ENCODE measurements at regions of chr16 and their contacts with region 1.

Region 1: GRCh38 chr16:3074860-3075522 is 9.6 kb downstream of the IL32 start:
- DNase-seq: peak; percentile 69
- ATAC-seq: peak; percentile 88
- H3K4me3 ChIP-seq: peak overlapping the region; percentile 55
- H3K27ac ChIP-seq: peak overlapping the region; percentile 77
- H3K4me1 ChIP-seq: peaks cover 45% of the 10 kb centered on the region
- H3K27me3 ChIP-seq: no peaks in the 10 kb centered on the region
- CTCF ChIP-seq: no peak
- EP300 ChIP-seq: no peak
- POLR2A ChIP-seq: peak; percentile 64
- RAD21 ChIP-seq: no peak

Region 2: DNA sequence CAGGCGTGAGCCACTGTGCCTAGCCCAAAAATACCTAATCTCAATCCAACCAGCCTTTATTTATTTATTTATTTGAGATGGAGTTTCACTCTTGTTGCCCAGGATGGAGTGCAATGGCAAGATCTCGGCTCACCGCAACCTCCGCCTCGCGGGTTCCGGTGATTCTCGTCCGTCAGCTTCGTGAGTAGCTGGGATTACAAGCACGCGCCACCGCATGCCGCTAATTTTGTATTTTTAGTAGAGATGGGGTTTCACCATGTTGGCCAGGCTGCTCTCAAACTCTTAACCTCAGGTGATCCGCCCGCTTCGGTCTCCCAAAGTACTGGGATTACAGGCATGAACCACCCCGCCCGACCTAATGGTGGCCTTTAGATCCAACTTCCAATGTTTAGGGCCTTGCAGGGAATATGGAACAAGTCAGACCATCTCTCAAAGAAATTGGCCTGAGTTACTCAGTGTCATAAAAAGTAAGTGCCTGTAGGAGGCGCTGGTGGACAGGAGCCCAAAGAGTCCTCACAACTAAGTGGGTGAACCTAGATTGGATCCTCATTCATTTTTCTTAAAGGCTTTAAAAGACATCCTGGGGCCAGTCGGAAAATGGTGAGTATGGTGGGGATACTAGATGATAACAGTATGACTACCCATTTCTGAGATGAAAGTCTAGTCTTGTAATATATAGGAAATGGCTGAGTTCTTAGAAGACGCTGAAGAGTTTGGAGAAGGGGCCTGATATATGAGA is 19.5 kb after region 1 on chr16:
- CTCF ChIA-PET with region 1: interaction called, 20 read pairs
- POLR2A ChIA-PET with region 1: interaction called, 4 read pairs
- RAD21 ChIA-PET with region 1: no interaction called
- SMC1A ChIA-PET with region 1: interaction called, 3 read pairs
- in situ Hi-C with region 1: no loop called
- intact Hi-C with region 1: no loop called
- DNase-seq: no peak
- ATAC-seq: peak; percentile 72
- H3K4me3 ChIP-seq: no peak overlapping the region
- H3K27ac ChIP-seq: no peak overlapping the region
- H3K4me1 ChIP-seq: peaks cover 6% of the 10 kb centered on the region; the same call in 1 of the 2 replicates
- H3K27me3 ChIP-seq: no peaks in the 10 kb centered on the region
- CTCF ChIP-seq: peak; percentile 64 to 75 (median 68)
- EP300 ChIP-seq: no peak
- POLR2A ChIP-seq: no peak
- RAD21 ChIP-seq: peak; percentile 63

Region 3: DNA sequence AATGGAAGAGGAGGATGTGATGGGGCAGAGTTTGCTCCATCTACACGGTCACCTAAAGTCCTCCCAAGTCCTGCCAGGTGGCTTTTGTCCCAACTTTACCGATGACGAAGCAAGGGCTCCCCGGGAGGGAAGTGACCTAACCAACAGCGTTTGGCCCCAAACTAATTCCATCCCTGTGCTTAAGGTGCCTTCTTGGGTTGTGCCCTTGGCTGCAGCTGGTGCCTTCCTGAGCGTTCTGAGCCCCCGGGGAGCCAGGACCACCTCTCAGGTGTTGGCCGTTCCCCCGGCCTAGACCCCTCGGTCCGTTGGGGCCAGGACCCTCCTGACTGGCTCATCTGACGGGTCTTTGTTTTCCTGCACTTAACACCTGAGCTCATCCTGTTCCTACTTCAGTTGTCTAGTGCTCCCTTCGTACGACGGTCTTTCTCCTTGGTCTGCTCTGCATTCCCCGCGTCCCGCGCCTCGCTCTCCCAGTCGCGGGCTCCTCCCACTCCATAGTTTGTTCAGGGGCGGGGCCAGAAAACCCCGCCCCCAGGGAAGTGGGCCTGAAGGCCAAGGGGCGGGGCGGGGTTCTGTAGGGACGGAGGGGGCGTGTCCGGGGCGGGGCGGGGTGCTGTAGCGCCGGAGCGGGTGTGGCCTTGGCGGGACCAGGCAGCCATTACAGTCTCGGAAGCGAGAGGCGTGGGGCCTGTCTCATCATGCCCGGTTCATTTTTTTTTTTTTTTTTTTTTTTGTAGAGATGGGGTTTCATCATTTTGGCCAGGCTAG is 24.9 kb after region 1 on chr16:
- CTCF ChIA-PET with region 1: interaction called, 20 read pairs
- POLR2A ChIA-PET with region 1: interaction called, 4 read pairs
- RAD21 ChIA-PET with region 1: no interaction called
- SMC1A ChIA-PET with region 1: no interaction called
- in situ Hi-C with region 1: no loop called
- intact Hi-C with region 1: loop called (anchors 2 kb)
- DNase-seq: no peak
- ATAC-seq: peak; percentile 92
- H3K4me3 ChIP-seq: peak overlapping the region; percentile 35; the same call in 1 of the 2 replicates
- H3K27ac ChIP-seq: no peak overlapping the region
- H3K4me1 ChIP-seq: peaks cover 29% of the 10 kb centered on the region
- H3K27me3 ChIP-seq: no peaks in the 10 kb centered on the region
- CTCF ChIP-seq: no peak
- EP300 ChIP-seq: no peak
- POLR2A ChIP-seq: peak; percentile 39; the same call in 1 of the 2 replicates
- RAD21 ChIP-seq: no peak

Region 4: DNA sequence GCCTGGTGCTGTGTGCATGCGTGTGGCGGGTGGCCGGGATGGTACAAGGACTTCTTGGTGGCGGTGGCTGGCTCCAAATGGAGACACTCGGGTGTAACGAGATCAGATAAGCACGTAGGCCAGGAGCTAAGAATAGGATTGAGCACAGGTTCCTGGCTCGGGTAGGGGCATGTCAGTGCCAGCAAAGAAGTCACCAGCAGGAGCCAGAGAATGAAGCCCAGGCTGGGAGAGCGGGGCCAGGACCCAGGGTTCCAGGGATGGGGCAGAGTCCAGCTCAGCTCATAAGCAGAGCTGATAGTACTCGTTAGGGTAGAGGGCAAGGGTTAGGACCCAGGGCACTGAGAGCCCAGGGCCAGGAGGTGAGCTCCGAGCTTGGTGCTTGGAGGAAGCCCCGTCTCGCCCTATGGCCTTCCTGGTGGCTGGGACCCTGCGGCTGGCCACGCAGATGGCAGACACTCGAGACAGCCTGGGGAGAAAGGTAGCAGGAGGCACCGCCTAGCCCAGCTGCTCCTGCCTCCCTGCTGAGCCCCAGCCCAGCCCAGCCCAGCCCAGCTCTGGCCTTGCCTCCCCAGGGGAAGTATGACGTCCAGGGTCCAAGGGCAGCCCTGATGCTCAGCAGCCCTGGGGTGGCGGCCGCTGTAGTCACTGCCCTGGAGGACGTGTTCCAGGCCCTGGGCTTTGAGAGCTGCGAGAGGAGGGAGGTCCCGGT is 68.8 kb after region 1 on chr16:
- CTCF ChIA-PET with region 1: no interaction called
- POLR2A ChIA-PET with region 1: no interaction called
- RAD21 ChIA-PET with region 1: no interaction called
- SMC1A ChIA-PET with region 1: no interaction called
- in situ Hi-C with region 1: no loop called
- intact Hi-C with region 1: no loop called
- DNase-seq: no peak
- ATAC-seq: no peak
- H3K4me3 ChIP-seq: no peak overlapping the region
- H3K27ac ChIP-seq: no peak overlapping the region
- H3K4me1 ChIP-seq: no peaks in the 10 kb centered on the region
- H3K27me3 ChIP-seq: no peaks in the 10 kb centered on the region
- CTCF ChIP-seq: no peak
- EP300 ChIP-seq: no peak
- POLR2A ChIP-seq: no peak
- RAD21 ChIP-seq: no peak